GM18951 (cell line): ENCODE measurements at regions of chr14 and their contacts with region 1.

Region 1: GRCh38 chr14:92783816-92784431 is 10.2 kb upstream of the GOLGA5 start:
- POLR2A ChIP-seq: no peak

Region 2: GRCh38 chr14:92712654-92713051 is 71.3 kb before region 1 on chr14:
- in situ Hi-C with region 1: loop called (anchors 5 kb)
- POLR2A ChIP-seq: no peak